ENCODE measurements at regions of chr11 and their contacts with region 1.

Region 1: GRCh38 chr11:129273944-129274711 is 82.0 kb upstream of the ARHGAP32 start:
- DNase-seq: no peak
- ATAC-seq: no peak
- H3K4me3 Mint-ChIP-seq: no peak overlapping the region
- H3K27ac Mint-ChIP-seq: no peak overlapping the region
- H3K4me1 Mint-ChIP-seq: peaks cover 36% of the 10 kb centered on the region
- H3K27me3 Mint-ChIP-seq: peaks cover 15% of the 10 kb centered on the region

Region 2: GRCh38 chr11:128058580-128059208 is 1215.4 kb before region 1 on chr11:
- CTCF ChIA-PET with region 1: no interaction called
- POLR2A ChIA-PET with region 1: no interaction called
- intact Hi-C with region 1: loop called in 1 of 2 experiments (anchors 5 kb)
- DNase-seq: no peak
- ATAC-seq: peak; percentile 73
- H3K4me3 Mint-ChIP-seq: no peak overlapping the region
- H3K27ac Mint-ChIP-seq: no peak overlapping the region
- H3K4me1 Mint-ChIP-seq: peaks cover 23% of the 10 kb centered on the region
- H3K27me3 Mint-ChIP-seq: no peaks in the 10 kb centered on the region

Region 3: GRCh38 chr11:129237880-129238638 is 36.1 kb before region 1 on chr11:
- CTCF ChIA-PET with region 1: no interaction called
- POLR2A ChIA-PET with region 1: no interaction called
- intact Hi-C with region 1: no loop called
- DNase-seq: no peak
- ATAC-seq: no peak
- H3K4me3 Mint-ChIP-seq: no peak overlapping the region
- H3K27ac Mint-ChIP-seq: no peak overlapping the region
- H3K4me1 Mint-ChIP-seq: peaks cover 14% of the 10 kb centered on the region
- H3K27me3 Mint-ChIP-seq: no peaks in the 10 kb centered on the region

Region 4: DNA sequence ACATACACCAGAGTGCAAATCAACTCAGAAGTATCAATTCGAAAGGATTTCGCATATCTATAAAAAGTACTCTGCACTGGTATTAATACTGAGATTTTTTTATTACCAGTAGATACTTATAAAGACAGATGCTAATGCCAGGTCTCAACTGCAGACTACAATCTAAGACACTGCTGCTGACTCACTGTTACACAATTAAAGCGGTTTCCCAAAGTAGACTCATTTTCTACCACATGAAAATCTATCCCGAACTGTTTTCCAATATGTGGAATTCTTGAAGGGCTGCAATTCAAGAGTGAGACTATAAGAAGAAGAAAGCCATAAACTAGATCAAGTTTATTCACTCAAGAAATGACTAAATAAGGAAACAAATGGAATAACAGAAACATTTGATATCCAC is 24.8 kb before region 1 on chr11:
- CTCF ChIA-PET with region 1: no interaction called
- POLR2A ChIA-PET with region 1: no interaction called
- intact Hi-C with region 1: loop called in 1 of 2 experiments (anchors 2 kb)
- DNase-seq: no peak
- ATAC-seq: no peak
- H3K4me3 Mint-ChIP-seq: no peak overlapping the region
- H3K27ac Mint-ChIP-seq: no peak overlapping the region
- H3K4me1 Mint-ChIP-seq: peaks cover 38% of the 10 kb centered on the region
- H3K27me3 Mint-ChIP-seq: no peaks in the 10 kb centered on the region

Measured in activated CD4-positive, alpha-beta T cell treated with anti-CD3 and anti-CD28 coated beads for 36 hours (primary cell).